Heart right ventricle (tissue), 16 donors: ENCODE measurements at regions of chr20 and their contacts with region 1.

Region 1: DNA sequence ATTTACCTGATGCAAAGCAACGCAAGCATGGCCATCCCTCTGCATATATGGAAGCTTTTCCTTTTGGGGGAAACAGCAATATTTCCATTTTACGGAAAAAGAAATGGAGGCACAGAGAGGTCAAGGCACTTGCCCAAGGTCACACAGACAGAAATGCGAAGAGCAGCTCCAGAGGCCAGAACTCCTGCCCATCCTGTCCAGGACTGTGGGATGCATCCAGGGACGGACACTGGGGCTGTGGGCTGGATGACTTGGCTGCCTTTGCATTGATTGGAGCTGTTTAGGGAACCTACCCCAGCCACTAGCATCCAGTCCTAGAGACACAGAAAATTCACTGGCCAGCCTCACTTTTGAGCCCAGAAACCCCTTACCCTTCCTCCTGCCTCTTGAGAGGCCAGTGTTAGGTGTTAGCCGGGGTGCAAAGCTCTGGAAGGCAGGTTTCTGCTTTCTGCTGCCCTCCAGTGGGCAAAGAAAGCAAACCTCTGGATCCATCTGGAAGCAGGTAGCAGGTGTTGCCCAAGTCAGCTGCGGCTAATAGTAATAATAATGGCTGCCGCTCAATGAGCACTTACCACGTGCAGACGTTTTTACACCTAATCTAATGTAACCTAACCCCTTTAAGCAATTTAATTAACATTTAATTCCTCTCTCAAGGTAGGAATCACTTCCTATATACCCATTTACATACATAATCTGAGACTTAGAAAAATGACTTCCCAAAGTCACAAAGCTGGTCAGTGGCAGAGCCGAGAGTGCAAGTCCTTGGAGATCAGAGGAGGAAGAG is 31.7 kb upstream of the CCN5 start:
- DNase-seq: no peak
- ATAC-seq: peak in 7 of 8 donors; percentile 43 to 75 (median 54)
- H3K4me3 ChIP-seq: no peak overlapping the region
- H3K27ac ChIP-seq: no peak overlapping the region
- H3K4me1 ChIP-seq: peaks cover 0 to 14% (median 6%) of the 10 kb centered on the region in 9 donors
- H3K27me3 ChIP-seq: peaks cover 0 to 4% (median 0%) of the 10 kb centered on the region in 7 donors
- CTCF ChIP-seq: peak in 8 of 9 donors; percentile 46 to 75 (median 56)

Region 2: DNA sequence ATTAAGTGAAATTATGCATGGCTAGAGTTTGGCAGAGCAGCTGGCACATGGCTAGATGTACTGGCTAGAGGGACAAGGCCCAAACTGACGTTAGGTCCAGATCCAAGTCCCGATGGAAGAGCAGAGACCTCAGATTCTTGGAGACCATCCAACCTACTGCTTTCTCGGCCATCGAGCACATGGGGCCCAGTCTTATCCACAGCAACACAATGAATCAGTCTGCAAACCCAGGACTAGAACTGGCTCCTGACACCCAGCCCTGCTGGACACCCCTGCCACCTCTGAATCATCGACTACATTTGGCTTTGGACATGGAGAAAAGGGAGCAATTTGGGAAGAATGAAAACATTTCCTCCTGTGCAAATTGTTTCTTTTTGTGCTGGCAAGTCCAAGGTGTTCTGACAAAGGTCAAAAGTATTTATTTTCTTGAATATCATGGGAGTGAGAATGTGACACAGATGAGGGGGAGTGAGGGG is 178.1 kb after region 1 on chr20:
- intact Hi-C with region 1: loop called (anchors 2 to 10 kb)
- DNase-seq: no peak
- ATAC-seq: peak; percentile 35 to 90 (median 46)
- H3K4me3 ChIP-seq: no peak overlapping the region
- H3K27ac ChIP-seq: no peak overlapping the region
- H3K4me1 ChIP-seq: peaks cover 0 to 30% (median 6%) of the 10 kb centered on the region in 9 donors
- H3K27me3 ChIP-seq: peaks cover 0 to 2% (median 0%) of the 10 kb centered on the region in 7 donors
- CTCF ChIP-seq: no peak

Region 3: DNA sequence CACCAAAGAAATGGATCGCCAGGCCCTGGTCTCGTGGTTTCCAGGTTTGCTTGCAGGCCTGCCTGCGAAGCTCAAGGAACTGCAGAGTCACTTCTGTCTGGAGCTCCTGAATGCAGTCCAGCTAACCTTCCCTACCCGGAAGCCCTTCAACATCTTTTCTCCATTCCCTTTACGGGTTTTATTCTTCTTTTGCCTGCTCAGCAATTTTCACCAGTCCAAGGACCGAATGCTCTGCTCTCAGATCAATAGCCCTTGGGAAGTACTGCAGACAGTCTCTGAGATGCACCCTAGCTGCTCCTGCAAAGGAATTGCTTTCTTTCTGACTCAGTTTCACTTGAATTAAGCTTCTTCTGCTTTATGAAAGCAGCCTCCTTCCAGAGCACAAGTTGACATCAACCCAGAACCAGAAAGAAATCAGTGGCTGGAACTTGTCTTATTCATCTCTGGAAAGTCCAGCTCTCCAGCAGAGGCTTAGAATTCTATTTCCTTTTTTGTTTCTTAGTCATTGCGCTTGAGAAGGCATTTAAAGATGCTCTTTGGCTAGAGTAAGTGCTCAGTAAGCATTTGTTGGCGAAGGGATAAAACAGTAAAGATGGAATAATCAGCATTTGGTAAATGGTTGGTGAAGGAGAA is 183.4 kb after region 1 on chr20:
- intact Hi-C with region 1: loop called (anchors 2 to 10 kb)
- DNase-seq: no peak
- ATAC-seq: no peak
- H3K4me3 ChIP-seq: no peak overlapping the region
- H3K27ac ChIP-seq: no peak overlapping the region
- H3K4me1 ChIP-seq: peaks cover 0 to 30% (median 14%) of the 10 kb centered on the region in 9 donors
- H3K27me3 ChIP-seq: peaks cover 0 to 5% (median 0%) of the 10 kb centered on the region in 7 donors
- CTCF ChIP-seq: no peak